ENCODE measurements at regions of chr1 and their contacts with region 1.

Region 1: GRCh38 chr1:97017895-97018294 is 296.3 kb downstream of the PTBP2 start:
- DNase-seq: no peak
- H3K4me3 ChIP-seq: no peak overlapping the region
- H3K27ac ChIP-seq: no peak overlapping the region
- H3K4me1 ChIP-seq: peaks cover 17% of the 10 kb centered on the region
- H3K27me3 ChIP-seq: no peaks in the 10 kb centered on the region
- CTCF ChIP-seq: no peak
- POLR2A ChIP-seq: no peak

Region 2: GRCh38 chr1:96979304-96980268 is 38.3 kb before region 1 on chr1:
- CTCF ChIA-PET with region 1: no interaction called
- POLR2A ChIA-PET with region 1: no interaction called
- dilution Hi-C with region 1: no loop called
- intact Hi-C with region 1: loop called (anchors 2 kb)
- DNase-seq: no peak
- H3K4me3 ChIP-seq: no peak overlapping the region
- H3K27ac ChIP-seq: no peak overlapping the region
- H3K4me1 ChIP-seq: peaks cover 16% of the 10 kb centered on the region
- H3K27me3 ChIP-seq: peaks cover 0 to 4% of the 10 kb centered on the region in 2 experiments
- CTCF ChIP-seq: no peak
- POLR2A ChIP-seq: no peak

Measured in endothelial cell of umbilical vein (primary cell).